ENCODE measurements at regions of chr10 and their contacts with region 1.

Region 1: DNA sequence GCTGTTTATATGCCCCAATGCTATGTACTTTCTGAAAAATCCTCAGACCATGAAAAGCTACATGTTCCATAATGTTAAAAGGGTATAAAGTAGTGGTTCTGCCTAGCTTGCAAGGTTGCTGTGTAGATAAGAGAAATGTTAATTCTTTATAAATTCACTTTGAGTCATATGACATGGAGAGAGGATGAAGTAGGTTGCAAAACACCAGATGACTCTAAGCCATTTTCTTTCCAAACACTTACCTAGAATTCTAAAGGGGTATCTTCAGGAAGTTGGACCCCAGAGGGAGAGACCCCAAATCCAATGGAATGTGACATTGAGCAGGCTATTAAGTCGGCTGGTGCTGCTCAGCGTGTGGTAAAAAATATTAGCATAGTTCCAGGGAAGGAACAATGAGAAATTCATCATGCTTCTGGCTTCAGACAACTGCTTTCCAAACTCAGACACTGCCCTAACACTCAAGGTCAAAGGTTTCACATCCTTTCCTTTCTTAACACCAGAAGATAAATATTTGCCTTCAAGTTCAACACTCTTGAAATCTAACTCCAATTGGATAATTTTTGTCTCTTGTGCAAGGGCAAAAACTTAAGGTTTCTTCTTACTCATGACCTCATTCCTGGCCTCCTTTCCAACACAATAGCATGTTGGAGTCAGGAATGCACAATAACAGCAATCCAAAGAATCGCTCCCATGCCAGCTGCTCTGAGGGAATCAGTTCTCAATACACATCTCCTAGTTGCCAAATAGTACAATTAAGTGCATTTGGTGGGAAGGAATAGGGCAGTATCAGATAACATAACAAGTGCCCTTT is 100.7 kb upstream of the AFAP1L2 start:
- DNase-seq: peak; percentile 99
- H3K4me3 ChIP-seq: no peak overlapping the region
- H3K27ac ChIP-seq: peak overlapping the region; percentile 76
- H3K4me1 ChIP-seq: peaks cover 48% of the 10 kb centered on the region
- H3K27me3 ChIP-seq: no peaks in the 10 kb centered on the region
- CTCF ChIP-seq: no peak
- POLR2A ChIP-seq: no peak

Region 2: GRCh38 chr10:114486938-114487814 is 17.8 kb before region 1 on chr10:
- CTCF ChIA-PET with region 1: interaction called, 7 read pairs
- POLR2A ChIA-PET with region 1: no interaction called
- dilution Hi-C with region 1: no loop called
- intact Hi-C with region 1: loop called (anchors 1 kb)
- DNase-seq: peak; percentile 86
- H3K4me3 ChIP-seq: no peak overlapping the region
- H3K27ac ChIP-seq: peak overlapping the region; percentile 19
- H3K4me1 ChIP-seq: peaks cover 25% of the 10 kb centered on the region
- H3K27me3 ChIP-seq: no peaks in the 10 kb centered on the region
- CTCF ChIP-seq: no peak
- POLR2A ChIP-seq: no peak

Region 3: GRCh38 chr10:114526504-114527238 is 21.7 kb after region 1 on chr10:
- CTCF ChIA-PET with region 1: interaction called, 3 read pairs
- POLR2A ChIA-PET with region 1: interaction called, 3 read pairs
- dilution Hi-C with region 1: no loop called
- intact Hi-C with region 1: loop called (anchors 1 kb)
- DNase-seq: peak; percentile 97
- H3K4me3 ChIP-seq: peak overlapping the region in 2 of 3 experiments; percentile 38 to 41
- H3K27ac ChIP-seq: peak overlapping the region; percentile 35
- H3K4me1 ChIP-seq: peaks cover 18% of the 10 kb centered on the region
- H3K27me3 ChIP-seq: no peaks in the 10 kb centered on the region
- CTCF ChIP-seq: no peak
- POLR2A ChIP-seq: peak; percentile 69

Region 4: GRCh38 chr10:114577133-114577532 is 72.2 kb after region 1 on chr10:
- CTCF ChIA-PET with region 1: no interaction called
- POLR2A ChIA-PET with region 1: no interaction called
- dilution Hi-C with region 1: no loop called
- intact Hi-C with region 1: no loop called
- DNase-seq: peak; percentile 88
- H3K4me3 ChIP-seq: no peak overlapping the region
- H3K27ac ChIP-seq: no peak overlapping the region
- H3K4me1 ChIP-seq: peaks cover 10% of the 10 kb centered on the region
- H3K27me3 ChIP-seq: no peaks in the 10 kb centered on the region
- CTCF ChIP-seq: no peak
- POLR2A ChIP-seq: no peak

Region 5: GRCh38 chr10:114743521-114744231 is 238.7 kb after region 1 on chr10:
- CTCF ChIA-PET with region 1: no interaction called
- POLR2A ChIA-PET with region 1: no interaction called
- dilution Hi-C with region 1: no loop called
- intact Hi-C with region 1: no loop called
- DNase-seq: no peak
- H3K4me3 ChIP-seq: no peak overlapping the region
- H3K27ac ChIP-seq: no peak overlapping the region
- H3K4me1 ChIP-seq: no peaks in the 10 kb centered on the region
- H3K27me3 ChIP-seq: no peaks in the 10 kb centered on the region
- CTCF ChIP-seq: no peak
- POLR2A ChIP-seq: no peak

Region 6: GRCh38 chr10:115018185-115018931 is 513.4 kb after region 1 on chr10:
- CTCF ChIA-PET with region 1: no interaction called
- POLR2A ChIA-PET with region 1: no interaction called
- dilution Hi-C with region 1: no loop called
- intact Hi-C with region 1: no loop called
- DNase-seq: no peak
- H3K4me3 ChIP-seq: no peak overlapping the region
- H3K27ac ChIP-seq: no peak overlapping the region
- H3K4me1 ChIP-seq: no peaks in the 10 kb centered on the region
- H3K27me3 ChIP-seq: peaks cover 0 to 1% of the 10 kb centered on the region in 2 experiments
- CTCF ChIP-seq: no peak
- POLR2A ChIP-seq: no peak

Measured in endothelial cell of umbilical vein (primary cell).